ENCODE measurements at regions of chr1 and their contacts with region 1.

Region 1: GRCh38 chr1:116474921-116475849 is 95.6 kb downstream of the CD58 start:
- DNase-seq: peak; percentile 65
- ATAC-seq: peak; percentile 77

Region 2: GRCh38 chr1:116377541-116378529 is 97.3 kb before region 1 on chr1:
- intact Hi-C with region 1: loop called (anchors 2 kb)
- DNase-seq: peak; percentile 87
- ATAC-seq: peak; percentile 52

Region 3: DNA sequence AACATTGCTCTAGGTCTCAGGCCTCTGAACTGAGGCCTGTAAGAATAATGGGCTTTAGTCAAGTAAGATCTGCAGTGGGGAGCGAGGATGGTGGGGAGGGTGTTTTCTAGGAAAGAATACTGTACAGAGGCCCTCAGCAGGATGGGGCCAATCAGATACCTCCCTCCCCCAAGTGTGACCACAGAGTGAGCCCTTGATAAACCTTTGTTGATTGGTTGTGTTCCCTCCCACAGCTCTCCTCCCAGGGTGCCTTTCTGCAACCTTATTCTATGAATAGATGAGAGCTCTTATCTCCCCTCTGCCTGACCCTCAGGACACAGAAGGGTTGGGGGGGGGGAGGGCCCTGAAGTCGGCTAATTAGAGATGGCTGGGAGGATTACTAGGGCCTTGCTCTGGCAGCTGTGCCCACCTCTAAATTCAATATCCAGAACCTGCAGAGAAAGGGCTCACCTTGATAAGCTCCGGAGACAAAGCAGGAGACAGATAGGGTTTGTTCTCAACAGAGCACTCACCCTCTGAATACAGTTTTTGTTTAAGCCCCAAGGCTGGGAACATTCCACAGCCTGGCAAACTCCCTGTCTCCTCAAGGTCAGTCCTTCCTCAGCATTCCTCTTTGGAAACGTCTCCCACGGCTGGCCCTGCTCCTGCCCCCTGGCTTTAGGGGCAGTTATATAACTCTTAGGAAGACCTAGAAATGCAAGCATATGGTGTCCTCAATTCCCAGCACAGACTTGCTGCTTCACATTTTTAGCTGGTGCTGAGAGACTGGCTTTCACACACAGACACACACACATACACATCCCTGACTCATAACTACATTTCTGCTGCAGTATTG is 59.3 kb before region 1 on chr1:
- intact Hi-C with region 1: loop called (anchors 1 kb)
- DNase-seq: no peak
- ATAC-seq: peak; percentile 88

Region 4: GRCh38 chr1:116433275-116434257 is 41.6 kb before region 1 on chr1:
- intact Hi-C with region 1: loop called (anchors 1 kb)
- DNase-seq: peak; percentile 80
- ATAC-seq: peak; percentile 90

Region 5: DNA sequence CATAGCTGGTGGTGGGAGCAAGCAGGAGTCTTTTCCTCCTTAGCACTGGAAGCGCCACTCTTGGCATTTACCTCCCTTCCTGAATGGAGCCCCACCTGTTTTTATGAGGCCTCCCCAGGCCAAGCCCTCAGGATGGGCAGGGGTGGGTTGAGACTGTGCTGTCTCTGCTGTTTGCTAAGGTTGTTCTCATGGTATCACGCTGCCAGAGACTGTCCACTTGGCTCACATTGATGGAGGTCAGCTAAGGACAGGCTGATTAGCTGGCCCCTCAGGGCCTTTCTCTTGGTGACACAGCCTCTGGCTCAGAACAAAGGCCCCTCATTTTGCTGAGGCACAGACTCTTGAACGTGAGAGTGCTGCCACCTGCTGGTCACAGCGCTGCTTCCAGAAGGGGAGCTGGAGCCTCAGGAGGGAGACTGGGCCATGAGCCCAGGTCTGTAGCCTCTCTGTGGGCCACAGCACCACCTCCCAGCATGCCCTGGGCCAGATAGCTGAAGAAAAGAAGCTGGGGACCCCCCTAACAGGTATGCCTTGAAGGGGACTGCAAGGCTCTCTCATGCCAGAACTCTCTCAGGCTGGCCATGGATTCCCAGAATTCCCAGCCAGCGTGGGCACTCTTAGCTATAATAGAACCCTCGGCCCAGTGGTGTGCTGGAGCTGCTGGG is 10.0 kb after region 1 on chr1:
- intact Hi-C with region 1: no loop called
- DNase-seq: peak; percentile 93
- ATAC-seq: peak; percentile 85

Region 6: GRCh38 chr1:116521186-116521585 is 46.0 kb after region 1 on chr1:
- intact Hi-C with region 1: no loop called
- DNase-seq: no peak
- ATAC-seq: peak; percentile 51

Measured in Right ventricle myocardium inferior (tissue), 1 donor.